ENCODE measurements at regions of chr2 and their contacts with region 1.

Region 1: DNA sequence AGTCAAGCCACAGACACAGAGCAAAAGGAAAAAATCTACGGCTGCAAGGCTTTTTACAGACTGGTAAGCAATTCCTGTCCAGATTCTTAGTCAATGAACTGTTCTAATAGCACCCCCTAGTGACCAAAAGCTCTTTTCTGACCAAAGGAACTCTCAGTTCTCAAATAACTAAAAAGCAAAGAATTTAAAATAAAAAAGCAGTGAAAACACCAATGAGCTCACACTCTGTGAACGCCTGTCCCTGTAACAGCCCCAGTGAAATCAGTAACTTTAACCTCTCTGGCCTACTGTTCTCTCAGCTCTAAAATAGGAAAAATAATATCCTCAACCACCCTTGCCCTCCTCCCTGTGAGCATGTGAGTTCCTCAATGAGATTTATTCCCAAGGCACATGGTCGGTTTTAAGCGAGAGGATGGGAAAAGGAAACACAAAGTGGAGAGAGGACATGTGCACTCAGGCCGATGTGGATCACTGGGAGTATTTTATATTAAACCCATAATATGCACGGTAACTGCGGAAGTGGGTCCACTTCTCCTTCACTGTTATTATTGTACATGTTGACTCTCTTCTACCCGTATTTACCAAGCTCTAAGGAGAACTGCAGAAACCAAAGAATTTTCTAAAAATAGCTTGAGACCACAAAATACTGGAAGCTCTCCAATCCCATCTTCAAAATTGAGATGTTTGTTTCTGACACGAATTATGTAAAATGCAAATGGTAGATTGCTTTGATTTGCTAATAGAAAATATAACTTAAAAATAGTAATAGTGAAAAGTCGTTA is 128.5 kb downstream of the STK39 start:
- DNase-seq: peak; percentile 71
- ATAC-seq: peak; percentile 79
- H3K4me3 ChIP-seq: no peak overlapping the region
- H3K27ac ChIP-seq: no peak overlapping the region
- H3K4me1 ChIP-seq: no peaks in the 10 kb centered on the region
- H3K27me3 ChIP-seq: no peaks in the 10 kb centered on the region
- CTCF ChIP-seq: peak; percentile 71
- EP300 ChIP-seq: no peak
- POLR2A ChIP-seq: no peak
- RAD21 ChIP-seq: peak; percentile 59

Region 2: GRCh38 chr2:166895243-166895642 is 1223.7 kb before region 1 on chr2:
- CTCF ChIA-PET with region 1: interaction called, 5 read pairs
- POLR2A ChIA-PET with region 1: no interaction called
- in situ Hi-C with region 1: loop called (anchors 25 kb)
- intact Hi-C with region 1: loop called (anchors 2 kb)
- DNase-seq: no peak
- ATAC-seq: no peak; the same call in 2 of the 3 replicates
- H3K4me3 ChIP-seq: no peak overlapping the region
- H3K27ac ChIP-seq: no peak overlapping the region
- H3K4me1 ChIP-seq: no peaks in the 10 kb centered on the region
- H3K27me3 ChIP-seq: no peaks in the 10 kb centered on the region
- CTCF ChIP-seq: peak; percentile 35
- EP300 ChIP-seq: no peak
- POLR2A ChIP-seq: no peak
- RAD21 ChIP-seq: no peak

Region 3: DNA sequence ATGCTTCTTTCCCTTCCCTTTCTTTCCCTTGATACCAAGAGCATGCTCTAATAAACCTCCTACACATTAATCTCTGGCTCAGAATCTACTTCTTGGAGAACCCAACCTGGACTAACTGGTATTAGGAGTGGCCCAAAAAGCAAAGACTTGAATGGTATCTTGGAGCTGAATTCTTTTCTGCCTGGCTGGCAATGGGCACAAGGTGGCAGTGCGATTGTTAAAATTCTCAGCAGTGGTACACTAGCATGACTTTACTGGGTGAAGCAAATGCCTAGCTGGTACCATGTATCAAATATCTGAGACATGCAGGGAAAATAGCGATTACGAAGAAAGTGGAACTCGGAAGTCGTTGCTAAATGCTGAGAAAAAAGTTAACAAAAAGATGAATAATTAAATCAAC is 854.5 kb before region 1 on chr2:
- CTCF ChIA-PET with region 1: no interaction called
- POLR2A ChIA-PET with region 1: no interaction called
- in situ Hi-C with region 1: loop called (anchors 25 kb)
- intact Hi-C with region 1: loop called (anchors 1 kb)
- DNase-seq: peak; percentile 3
- ATAC-seq: peak; percentile 49; the same call in 1 of the 3 replicates
- H3K4me3 ChIP-seq: no peak overlapping the region
- H3K27ac ChIP-seq: no peak overlapping the region
- H3K4me1 ChIP-seq: no peaks in the 10 kb centered on the region
- H3K27me3 ChIP-seq: no peaks in the 10 kb centered on the region
- CTCF ChIP-seq: peak; percentile 55
- EP300 ChIP-seq: no peak
- POLR2A ChIP-seq: no peak
- RAD21 ChIP-seq: no peak

Region 4: DNA sequence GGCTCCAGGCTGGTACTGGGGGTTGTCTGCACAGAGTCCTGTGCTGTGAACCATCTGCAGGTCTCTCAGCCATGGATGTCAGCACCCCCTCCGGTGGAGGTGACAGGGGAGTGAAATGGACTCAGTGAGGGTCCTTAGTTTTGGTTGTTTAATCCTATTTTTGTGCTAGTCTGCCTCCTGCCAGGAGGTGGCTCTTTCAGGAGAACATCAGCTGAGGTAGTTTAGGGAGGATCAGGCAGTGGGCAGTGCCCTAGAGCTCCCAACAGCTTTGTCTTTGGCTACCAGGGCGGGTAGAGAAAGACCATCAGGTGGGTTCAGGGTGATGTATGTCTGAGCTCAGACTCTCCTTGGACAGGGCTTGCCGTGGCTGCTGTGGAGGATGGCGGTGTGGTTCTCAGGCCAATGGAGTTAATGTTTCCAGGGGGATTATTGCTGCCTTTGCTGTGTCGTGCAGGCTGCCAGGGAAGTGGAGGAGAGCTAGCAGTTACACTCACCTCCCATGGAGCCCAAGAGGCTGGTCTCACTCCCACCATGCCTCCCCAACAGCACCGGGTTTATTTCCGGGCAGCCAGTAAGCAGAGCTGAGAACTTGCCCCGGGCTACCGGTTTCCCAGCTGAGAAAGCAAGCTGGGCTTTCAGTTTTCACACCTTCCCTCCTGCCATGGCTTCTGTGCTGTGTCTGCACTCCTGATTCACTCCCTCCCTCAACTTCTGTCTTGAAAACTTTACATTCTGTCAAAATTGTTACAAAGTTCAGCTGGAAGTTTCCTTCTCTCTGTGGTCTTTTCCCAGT is 667.2 kb before region 1 on chr2:
- CTCF ChIA-PET with region 1: no interaction called
- POLR2A ChIA-PET with region 1: no interaction called
- in situ Hi-C with region 1: no loop called
- intact Hi-C with region 1: loop called (anchors 2 kb)
- DNase-seq: no peak
- ATAC-seq: peak; percentile 78
- H3K4me3 ChIP-seq: no peak overlapping the region
- H3K27ac ChIP-seq: no peak overlapping the region
- H3K4me1 ChIP-seq: no peaks in the 10 kb centered on the region
- H3K27me3 ChIP-seq: no peaks in the 10 kb centered on the region; a peak in 1 of 5 replicates
- CTCF ChIP-seq: peak; percentile 22; the same call in 1 of the 2 replicates
- EP300 ChIP-seq: no peak
- POLR2A ChIP-seq: no peak
- RAD21 ChIP-seq: no peak

Region 5: GRCh38 chr2:167595839-167596471 is 523.0 kb before region 1 on chr2:
- CTCF ChIA-PET with region 1: no interaction called
- POLR2A ChIA-PET with region 1: no interaction called
- in situ Hi-C with region 1: no loop called
- intact Hi-C with region 1: loop called (anchors 2 kb)
- DNase-seq: no peak
- ATAC-seq: no peak
- H3K4me3 ChIP-seq: no peak overlapping the region
- H3K27ac ChIP-seq: no peak overlapping the region
- H3K4me1 ChIP-seq: no peaks in the 10 kb centered on the region
- H3K27me3 ChIP-seq: no peaks in the 10 kb centered on the region
- CTCF ChIP-seq: no peak
- EP300 ChIP-seq: no peak
- POLR2A ChIP-seq: no peak
- RAD21 ChIP-seq: no peak

Region 6: DNA sequence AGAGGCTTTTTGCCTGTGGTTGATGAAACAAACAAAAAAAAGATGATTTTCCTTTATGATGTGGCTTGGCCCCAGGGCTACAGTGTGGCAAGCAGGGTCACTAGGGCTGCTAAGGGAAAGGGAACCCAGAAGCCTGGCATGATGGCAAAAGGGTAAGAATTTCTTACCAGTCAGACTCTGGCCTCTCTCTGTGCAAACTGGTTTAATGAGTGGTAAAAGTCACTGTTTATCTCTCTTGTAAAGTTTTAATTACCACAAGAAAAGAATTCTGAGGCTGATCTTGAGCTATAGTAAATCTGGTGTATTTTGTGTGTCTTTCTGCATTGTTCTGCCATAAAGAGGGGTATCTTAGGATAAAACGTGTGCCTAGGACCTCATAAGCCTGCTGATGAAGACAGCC is 146.9 kb before region 1 on chr2:
- CTCF ChIA-PET with region 1: no interaction called
- POLR2A ChIA-PET with region 1: no interaction called
- in situ Hi-C with region 1: no loop called
- intact Hi-C with region 1: no loop called
- DNase-seq: no peak
- ATAC-seq: no peak
- H3K4me3 ChIP-seq: no peak overlapping the region
- H3K27ac ChIP-seq: no peak overlapping the region
- H3K4me1 ChIP-seq: no peaks in the 10 kb centered on the region
- H3K27me3 ChIP-seq: no peaks in the 10 kb centered on the region
- CTCF ChIP-seq: no peak
- EP300 ChIP-seq: no peak
- POLR2A ChIP-seq: no peak
- RAD21 ChIP-seq: no peak

Region 7: DNA sequence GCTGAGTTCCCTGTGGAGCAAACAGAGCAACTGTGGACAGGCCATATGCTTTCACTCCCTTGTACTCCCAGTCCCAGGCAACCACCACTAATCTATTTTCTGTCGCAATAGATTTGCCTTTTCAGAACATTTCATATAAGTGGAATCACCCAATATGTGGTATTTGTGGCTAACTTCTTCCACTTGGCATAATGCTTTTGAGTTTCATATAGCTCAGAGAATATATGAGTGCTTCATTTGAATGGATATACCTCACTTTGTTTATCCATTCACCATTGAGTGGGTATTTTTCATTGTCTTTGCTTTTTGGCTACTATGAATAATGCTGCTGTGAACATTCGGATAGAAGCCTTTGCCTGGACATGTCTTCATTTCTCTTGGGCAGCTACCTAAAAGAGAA is 489.1 kb after region 1 on chr2:
- CTCF ChIA-PET with region 1: no interaction called
- POLR2A ChIA-PET with region 1: no interaction called
- in situ Hi-C with region 1: no loop called
- intact Hi-C with region 1: no loop called
- DNase-seq: no peak
- ATAC-seq: no peak
- H3K4me3 ChIP-seq: no peak overlapping the region
- H3K27ac ChIP-seq: no peak overlapping the region
- H3K4me1 ChIP-seq: peaks cover 6% of the 10 kb centered on the region
- H3K27me3 ChIP-seq: no peaks in the 10 kb centered on the region
- CTCF ChIP-seq: no peak
- EP300 ChIP-seq: no peak
- POLR2A ChIP-seq: no peak
- RAD21 ChIP-seq: no peak